Naive thymus-derived CD4-positive, alpha-beta T cell (primary cell): ENCODE measurements at regions of chr14 and their contacts with region 1.

Region 1: DNA sequence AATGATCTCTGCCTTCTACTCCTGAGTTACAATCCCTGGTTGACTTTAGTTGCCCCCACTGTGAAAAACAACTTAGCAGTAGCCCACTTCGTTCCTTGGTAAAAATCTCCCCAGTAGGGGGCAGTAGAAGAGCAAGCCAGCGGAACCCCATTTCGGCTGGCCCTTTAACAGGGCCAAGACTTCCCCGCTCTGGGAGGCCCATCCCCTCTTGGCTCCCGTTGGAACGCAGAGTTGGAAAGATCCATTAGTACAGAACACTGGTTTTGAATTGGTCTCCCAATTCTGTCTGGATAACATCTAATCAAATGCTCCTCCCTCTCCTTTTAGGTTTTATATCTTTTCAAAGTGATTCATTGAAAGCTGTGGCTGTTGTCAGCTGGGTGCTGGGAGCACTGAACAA is 1133.3 kb downstream of the BCL11B start:
- DNase-seq: peak; percentile 35 to 87 (median 81)
- ATAC-seq: peak; percentile 75
- H3K4me3 ChIP-seq: peak overlapping the region; percentile 52
- H3K4me3 Mint-ChIP-seq: peak overlapping the region; percentile 75 to 99 (median 93)
- H3K27ac ChIP-seq: peak overlapping the region; percentile 78
- H3K27ac Mint-ChIP-seq: peak overlapping the region; percentile 90 to 99 (median 96)
- H3K4me1 ChIP-seq: peaks cover 70 to 76% of the 10 kb centered on the region in 2 donors
- H3K4me1 Mint-ChIP-seq: peaks cover 66 to 100% (median 96%) of the 10 kb centered on the region in 7 donors
- H3K27me3 ChIP-seq: no peaks in the 10 kb centered on the region
- H3K27me3 Mint-ChIP-seq: no peaks in the 10 kb centered on the region

Region 2: DNA sequence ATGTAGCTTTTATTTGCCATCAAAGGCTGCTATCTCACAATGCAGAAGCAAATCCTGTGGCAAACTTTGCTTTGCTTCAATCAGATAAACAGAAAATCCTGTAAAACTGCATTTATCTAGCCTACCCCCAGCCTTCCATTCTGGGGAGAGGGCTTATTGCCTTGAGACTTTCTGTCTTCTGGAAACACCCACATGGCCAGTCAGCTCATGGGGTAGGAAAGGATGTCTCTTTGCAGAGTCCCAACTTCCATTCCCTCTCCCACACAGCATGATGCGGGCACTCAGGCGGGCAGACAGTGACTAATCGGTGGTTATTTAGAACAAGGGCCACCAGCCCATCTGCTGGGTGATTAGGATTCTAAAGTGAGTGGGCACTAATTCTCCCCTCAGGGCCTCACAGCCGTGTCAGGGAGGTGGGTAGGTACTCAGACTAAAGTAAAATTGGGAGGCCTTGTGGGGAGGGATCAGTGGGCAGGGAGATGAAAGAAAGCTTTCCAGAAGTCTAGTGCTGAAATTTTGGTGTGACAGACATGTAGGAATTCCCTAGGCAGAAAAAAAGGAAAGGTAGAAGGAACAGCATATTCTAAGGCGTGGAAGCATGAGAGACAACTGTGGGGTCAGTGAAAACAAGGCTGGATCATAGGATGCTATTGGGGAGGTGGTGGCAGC is 621.0 kb before region 1 on chr14:
- CTCF ChIA-PET with region 1: no interaction called
- POLR2A ChIA-PET with region 1: no interaction called
- intact Hi-C with region 1: no loop called
- DNase-seq: no peak
- ATAC-seq: no peak
- H3K4me3 ChIP-seq: no peak overlapping the region
- H3K4me3 Mint-ChIP-seq: no peak overlapping the region
- H3K27ac ChIP-seq: no peak overlapping the region
- H3K27ac Mint-ChIP-seq: no peak overlapping the region
- H3K4me1 ChIP-seq: no peaks in the 10 kb centered on the region
- H3K4me1 Mint-ChIP-seq: peaks cover 0 to 5% (median 0%) of the 10 kb centered on the region in 7 donors
- H3K27me3 ChIP-seq: no peaks in the 10 kb centered on the region
- H3K27me3 Mint-ChIP-seq: no peaks in the 10 kb centered on the region

Region 3: DNA sequence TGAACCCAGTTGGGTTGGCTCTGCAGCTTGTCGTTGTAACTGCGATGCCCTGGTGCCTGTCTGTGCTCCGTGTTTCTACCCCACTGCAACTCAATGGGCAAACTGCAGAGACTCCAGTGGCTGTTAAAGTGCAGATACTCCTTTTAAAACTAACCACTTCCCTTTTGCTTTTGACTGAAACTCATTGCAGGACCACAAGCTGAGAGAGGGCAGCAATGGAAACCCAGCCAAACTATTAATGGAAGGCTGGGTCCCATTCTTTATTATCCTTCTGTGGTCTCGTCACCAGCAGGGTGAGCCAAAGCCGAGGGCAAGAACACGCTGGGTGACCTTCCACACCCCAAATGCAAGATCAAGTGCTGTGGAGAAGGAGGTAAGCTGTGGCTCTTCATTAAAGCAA is 431.1 kb before region 1 on chr14:
- CTCF ChIA-PET with region 1: no interaction called
- POLR2A ChIA-PET with region 1: interaction called, 3 read pairs
- intact Hi-C with region 1: loop called in 1 of 2 experiments (anchors 10 kb)
- DNase-seq: peak in 1 of 9 donors; percentile 19
- ATAC-seq: peak; percentile 25
- H3K4me3 ChIP-seq: peak overlapping the region; percentile 7
- H3K4me3 Mint-ChIP-seq: peak overlapping the region in 9 of 10 donors; percentile 7 to 83 (median 52)
- H3K27ac ChIP-seq: no peak overlapping the region
- H3K27ac Mint-ChIP-seq: peak overlapping the region; percentile 26 to 96 (median 85)
- H3K4me1 ChIP-seq: peaks cover 81 to 85% of the 10 kb centered on the region in 2 donors
- H3K4me1 Mint-ChIP-seq: peaks cover 70 to 100% (median 98%) of the 10 kb centered on the region in 7 donors
- H3K27me3 ChIP-seq: no peaks in the 10 kb centered on the region
- H3K27me3 Mint-ChIP-seq: no peaks in the 10 kb centered on the region

Region 4: DNA sequence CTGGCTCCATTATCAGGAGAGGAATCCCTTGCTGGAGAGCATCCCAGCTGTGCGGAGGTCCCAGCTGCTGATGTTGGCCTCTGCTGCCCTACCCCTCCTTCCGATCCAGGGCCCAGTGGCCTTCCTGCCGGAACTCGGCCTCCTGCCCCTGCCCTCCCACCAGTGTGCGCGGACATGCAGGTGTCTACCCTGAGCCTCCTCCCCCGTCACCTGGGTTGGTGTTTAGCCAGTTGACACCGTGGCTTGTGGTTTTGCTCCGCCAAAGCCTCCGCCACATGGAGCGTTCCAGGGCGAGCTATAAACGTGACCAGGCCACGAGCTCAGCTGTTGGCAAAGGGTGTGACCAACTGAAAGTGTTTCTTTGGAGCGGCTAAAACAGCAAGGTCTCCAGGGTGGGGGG is 29.0 kb after region 1 on chr14:
- CTCF ChIA-PET with region 1: interaction called, 25 read pairs
- POLR2A ChIA-PET with region 1: interaction called, 265 read pairs
- intact Hi-C with region 1: loop called (anchors 2 kb)
- DNase-seq: peak in 3 of 9 donors; percentile 34 to 45 (median 39)
- ATAC-seq: peak; percentile 27
- H3K4me3 ChIP-seq: peak overlapping the region; percentile 39
- H3K4me3 Mint-ChIP-seq: peak overlapping the region; percentile 49 to 84 (median 73)
- H3K27ac ChIP-seq: peak overlapping the region; percentile 81
- H3K27ac Mint-ChIP-seq: peak overlapping the region; percentile 83 to 100 (median 97)
- H3K4me1 ChIP-seq: peaks cover 55 to 88% of the 10 kb centered on the region in 2 donors
- H3K4me1 Mint-ChIP-seq: peaks cover 48 to 100% (median 96%) of the 10 kb centered on the region in 7 donors
- H3K27me3 ChIP-seq: no peaks in the 10 kb centered on the region
- H3K27me3 Mint-ChIP-seq: no peaks in the 10 kb centered on the region

Region 5: GRCh38 chr14:98227000-98227726 is 88.5 kb after region 1 on chr14:
- CTCF ChIA-PET with region 1: interaction called, 8 read pairs
- POLR2A ChIA-PET with region 1: interaction called, 17 read pairs
- intact Hi-C with region 1: loop called (anchors 1 to 2 kb)
- DNase-seq: peak in 4 of 9 donors; percentile 33 to 57 (median 38)
- ATAC-seq: no peak
- H3K4me3 ChIP-seq: peak overlapping the region; percentile 28
- H3K4me3 Mint-ChIP-seq: peak overlapping the region; percentile 51 to 85 (median 68)
- H3K27ac ChIP-seq: peak overlapping the region; percentile 83
- H3K27ac Mint-ChIP-seq: peak overlapping the region; percentile 92 to 100 (median 96)
- H3K4me1 ChIP-seq: peaks cover 35 to 90% of the 10 kb centered on the region in 2 donors
- H3K4me1 Mint-ChIP-seq: peaks cover 48 to 96% (median 91%) of the 10 kb centered on the region in 7 donors
- H3K27me3 ChIP-seq: no peaks in the 10 kb centered on the region
- H3K27me3 Mint-ChIP-seq: no peaks in the 10 kb centered on the region

Region 6: DNA sequence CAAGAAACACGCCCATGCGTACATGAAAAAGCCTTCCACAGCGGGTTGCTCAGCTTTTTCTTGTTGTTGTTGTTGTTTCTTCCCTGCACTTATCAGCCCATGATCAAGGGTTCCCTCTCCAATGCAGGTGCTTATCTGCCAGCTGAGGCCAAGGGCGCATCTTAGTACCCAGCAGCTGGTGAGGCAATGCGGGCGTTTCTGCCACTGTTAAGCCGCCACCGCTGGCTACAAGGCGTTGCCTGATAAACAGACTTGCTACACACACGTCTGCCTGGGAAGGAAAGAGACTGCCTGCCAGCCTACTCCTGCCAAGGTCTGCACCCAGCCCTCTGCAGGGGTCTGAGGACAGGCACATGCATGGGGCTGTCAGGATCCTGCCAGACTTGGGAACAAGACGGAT is 787.5 kb after region 1 on chr14:
- CTCF ChIA-PET with region 1: interaction called, 4 read pairs
- POLR2A ChIA-PET with region 1: interaction called, 6 read pairs
- intact Hi-C with region 1: loop called (anchors 2 to 10 kb)
- DNase-seq: peak in 8 of 9 donors; percentile 21 to 72 (median 63)
- ATAC-seq: peak; percentile 83
- H3K4me3 ChIP-seq: peak overlapping the region; percentile 9
- H3K4me3 Mint-ChIP-seq: peak overlapping the region; percentile 12 to 88 (median 84)
- H3K27ac ChIP-seq: peak overlapping the region; percentile 56
- H3K27ac Mint-ChIP-seq: peak overlapping the region in 8 of 9 donors; percentile 92 to 98 (median 95)
- H3K4me1 ChIP-seq: peaks cover 7 to 46% of the 10 kb centered on the region in 2 donors
- H3K4me1 Mint-ChIP-seq: peaks cover 31 to 76% (median 60%) of the 10 kb centered on the region in 7 donors
- H3K27me3 ChIP-seq: no peaks in the 10 kb centered on the region
- H3K27me3 Mint-ChIP-seq: peaks cover 0 to 12% (median 0%) of the 10 kb centered on the region in 5 donors

Region 7: GRCh38 chr14:99271951-99272631 is 1133.4 kb after region 1 on chr14 and contains the start of gene BCL11B:
- CTCF ChIA-PET with region 1: interaction called, 53 read pairs
- POLR2A ChIA-PET with region 1: interaction called, 212 read pairs
- intact Hi-C with region 1: loop called (anchors 1 kb)
- DNase-seq: peak; percentile 63 to 94 (median 91)
- ATAC-seq: peak; percentile 89
- H3K4me3 ChIP-seq: peak within 1 kb of the TSS; percentile 94
- H3K4me3 Mint-ChIP-seq: peak within 1 kb of the TSS; percentile 92 to 100 (median 98)
- H3K27ac ChIP-seq: peak within 1 kb of the TSS; percentile 98
- H3K27ac Mint-ChIP-seq: peak within 1 kb of the TSS; percentile 91 to 99 (median 98)
- H3K4me1 ChIP-seq: peaks cover 6 to 12% of the 10 kb centered on the region in 2 donors
- H3K4me1 Mint-ChIP-seq: peaks cover 25 to 46% (median 34%) of the 10 kb centered on the region in 7 donors
- H3K27me3 ChIP-seq: no peaks in the 10 kb centered on the region
- H3K27me3 Mint-ChIP-seq: peaks cover 0 to 26% (median 0%) of the 10 kb centered on the region in 5 donors
- total RNA-seq, gene BCL11B: 96.3 to 269 (median 223) TPM